Activated CD8-positive, alpha-beta T cell treated with anti-CD3 and anti-CD28 coated beads for 36 hours (primary cell): ENCODE measurements at regions of chr10 and their contacts with region 1.

Region 1: GRCh38 chr10:68955832-68956532 is at the start of gene DDX21:
- DNase-seq: peak; percentile 93
- ATAC-seq: peak; percentile 88
- H3K4me3 Mint-ChIP-seq: peak within 1 kb of the TSS; percentile 99
- H3K27ac Mint-ChIP-seq: peak within 1 kb of the TSS; percentile 100
- H3K4me1 Mint-ChIP-seq: peaks cover 38% of the 10 kb centered on the region
- H3K27me3 Mint-ChIP-seq: no peaks in the 10 kb centered on the region
- CTCF ChIP-seq: peak; percentile 80
- total RNA-seq, gene DDX21: 192 to 194 TPM

Region 2: GRCh38 chr10:68901104-68901927 is 54.7 kb before region 1 on chr10 and contains the start of gene DDX50:
- CTCF ChIA-PET with region 1: interaction called, 3 read pairs
- POLR2A ChIA-PET with region 1: interaction called, 34 read pairs
- intact Hi-C with region 1: loop called (anchors 5 kb)
- DNase-seq: peak; percentile 99
- ATAC-seq: peak; percentile 97
- H3K4me3 Mint-ChIP-seq: peak within 1 kb of the TSS; percentile 99
- H3K27ac Mint-ChIP-seq: peak within 1 kb of the TSS; percentile 99
- H3K4me1 Mint-ChIP-seq: peaks cover 41% of the 10 kb centered on the region
- H3K27me3 Mint-ChIP-seq: no peaks in the 10 kb centered on the region
- CTCF ChIP-seq: no peak
- total RNA-seq, gene DDX50: 102 to 105 TPM

Region 3: DNA sequence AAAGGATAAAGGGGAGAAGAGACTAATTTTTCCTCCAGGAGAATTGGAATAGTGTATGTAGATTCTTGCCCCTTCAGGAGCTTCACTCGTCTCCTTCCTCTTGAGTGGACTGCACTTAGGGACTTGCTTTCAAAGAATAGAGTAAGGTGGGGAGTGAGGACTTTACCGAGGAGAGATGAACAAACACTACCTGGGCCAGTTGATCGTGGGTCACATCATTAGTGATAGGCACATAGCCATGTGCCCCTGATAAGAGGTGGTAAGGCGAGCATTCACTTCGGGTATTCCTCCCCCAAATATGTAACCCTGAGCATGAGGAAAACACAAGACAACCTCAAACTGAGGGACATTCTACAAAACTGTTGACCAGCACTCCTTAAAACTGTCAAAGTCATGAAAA is 18.0 kb after region 1 on chr10:
- CTCF ChIA-PET with region 1: interaction called, 9 read pairs
- POLR2A ChIA-PET with region 1: interaction called, 105 read pairs
- intact Hi-C with region 1: no loop called
- DNase-seq: no peak
- ATAC-seq: no peak
- H3K4me3 Mint-ChIP-seq: no peak overlapping the region
- H3K27ac Mint-ChIP-seq: no peak overlapping the region
- H3K4me1 Mint-ChIP-seq: peaks cover 6% of the 10 kb centered on the region
- H3K27me3 Mint-ChIP-seq: no peaks in the 10 kb centered on the region
- CTCF ChIP-seq: no peak

Region 4: DNA sequence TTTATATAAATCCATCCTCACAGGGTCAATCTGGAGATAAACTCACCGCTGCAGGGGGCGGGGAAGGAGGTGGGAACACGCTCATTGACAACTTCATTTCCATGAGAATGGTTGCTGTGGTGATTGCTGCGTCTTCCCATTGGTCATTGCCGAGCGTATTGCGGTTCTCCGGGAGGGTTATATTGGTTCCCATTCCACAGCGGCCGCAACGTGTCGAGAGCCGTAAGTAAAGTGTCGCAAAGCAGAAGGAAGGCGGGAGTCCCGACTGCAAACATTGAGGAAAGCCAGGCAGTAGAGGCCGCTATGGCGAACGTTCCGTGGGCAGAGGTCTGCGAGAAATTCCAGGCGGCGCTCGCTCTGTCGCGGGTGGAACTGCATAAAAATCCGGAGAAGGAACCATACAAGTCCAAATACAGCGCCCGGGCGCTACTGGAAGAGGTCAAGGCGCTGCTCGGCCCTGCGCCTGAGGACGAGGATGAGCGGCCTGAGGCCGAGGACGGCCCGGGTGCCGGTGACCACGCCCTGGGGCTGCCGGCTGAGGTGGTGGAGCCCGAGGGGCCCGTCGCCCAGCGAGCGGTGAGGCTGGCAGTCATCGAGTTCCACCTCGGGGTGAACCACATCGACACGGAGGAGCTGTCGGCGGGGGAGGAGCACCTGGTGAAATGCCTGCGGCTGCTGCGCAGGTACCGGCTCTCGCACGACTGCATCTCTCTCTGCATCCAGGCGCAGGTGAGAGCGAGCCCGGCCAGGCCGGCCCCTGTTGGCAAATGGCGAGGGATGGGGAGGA is 32.7 kb after region 1 on chr10 and contains the start of gene KIFBP:
- CTCF ChIA-PET with region 1: interaction called, 14 read pairs
- POLR2A ChIA-PET with region 1: interaction called, 11 read pairs
- intact Hi-C with region 1: no loop called
- DNase-seq: peak; percentile 92
- ATAC-seq: peak; percentile 87
- H3K4me3 Mint-ChIP-seq: peak within 1 kb of the TSS; percentile 98
- H3K27ac Mint-ChIP-seq: peak within 1 kb of the TSS; percentile 95
- H3K4me1 Mint-ChIP-seq: peaks cover 50% of the 10 kb centered on the region
- H3K27me3 Mint-ChIP-seq: no peaks in the 10 kb centered on the region
- CTCF ChIP-seq: peak; percentile 39
- total RNA-seq, gene KIFBP: 9.7 to 10.9 TPM

Region 5: DNA sequence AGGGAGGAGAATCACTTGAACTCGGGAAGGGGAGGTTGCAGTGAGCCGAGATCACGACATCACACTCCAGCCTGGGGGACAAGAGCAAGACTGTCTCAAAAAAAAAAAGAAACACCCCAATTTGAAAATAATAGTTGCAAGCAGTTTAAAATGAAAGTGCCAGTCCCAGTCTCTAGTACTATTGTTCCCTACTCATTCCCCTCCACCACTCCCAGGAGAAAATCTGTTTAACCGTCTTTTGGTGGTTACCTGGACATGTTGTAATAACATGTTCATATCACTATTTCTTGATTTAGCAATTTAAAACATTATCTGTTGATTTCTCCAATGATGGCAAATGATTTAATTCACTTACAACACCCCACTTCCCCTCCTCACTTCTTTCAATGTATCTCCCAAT is 77.3 kb after region 1 on chr10:
- CTCF ChIA-PET with region 1: no interaction called
- POLR2A ChIA-PET with region 1: no interaction called
- intact Hi-C with region 1: no loop called
- DNase-seq: no peak
- ATAC-seq: no peak
- H3K4me3 Mint-ChIP-seq: no peak overlapping the region
- H3K27ac Mint-ChIP-seq: no peak overlapping the region
- H3K4me1 Mint-ChIP-seq: peaks cover 2% of the 10 kb centered on the region
- H3K27me3 Mint-ChIP-seq: no peaks in the 10 kb centered on the region
- CTCF ChIP-seq: no peak

Region 6: DNA sequence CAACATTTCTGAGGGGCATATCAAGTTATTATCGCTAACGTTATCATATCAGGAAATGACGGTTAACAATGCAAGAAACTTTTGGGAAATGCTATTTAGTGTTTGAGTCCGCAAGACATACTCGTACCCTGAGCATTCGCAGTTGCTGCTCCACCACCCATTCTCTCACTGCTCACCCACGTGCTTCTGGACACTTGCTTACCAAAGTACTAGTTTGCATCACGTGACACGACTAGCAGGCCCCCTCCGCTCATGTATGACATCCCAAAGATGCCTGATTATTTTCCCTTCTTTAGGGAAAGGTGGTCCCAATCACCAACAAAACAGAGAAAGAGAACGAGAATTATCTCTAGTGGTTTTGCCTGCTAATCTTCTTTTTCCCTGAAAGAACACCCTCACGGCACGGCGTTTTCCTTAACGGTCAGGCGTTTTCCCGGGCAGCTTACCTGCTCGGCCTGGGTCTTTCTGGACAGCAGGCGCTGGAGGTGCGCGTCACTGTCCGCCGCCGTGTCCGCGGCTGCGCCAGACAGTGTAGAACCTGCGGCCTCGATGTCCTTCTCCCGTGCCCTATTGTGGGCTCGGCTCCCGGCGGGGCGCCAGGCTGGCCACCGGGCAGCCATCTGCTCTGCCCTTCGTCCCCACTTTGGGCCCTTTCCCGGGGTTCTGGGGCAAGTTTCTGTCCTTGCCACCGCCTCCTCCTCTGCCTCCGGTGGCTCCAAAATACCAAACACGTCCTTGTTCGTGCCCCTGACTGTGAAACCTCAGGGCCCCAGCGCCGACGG is 224.0 kb after region 1 on chr10 and contains the start of gene SUPV3L1:
- CTCF ChIA-PET with region 1: no interaction called
- POLR2A ChIA-PET with region 1: interaction called, 11 read pairs
- intact Hi-C with region 1: no loop called
- DNase-seq: peak; percentile 96
- ATAC-seq: peak; percentile 91
- H3K4me3 Mint-ChIP-seq: peak within 1 kb of the TSS; percentile 84
- H3K27ac Mint-ChIP-seq: peak within 1 kb of the TSS; percentile 100
- H3K4me1 Mint-ChIP-seq: peaks cover 36% of the 10 kb centered on the region
- H3K27me3 Mint-ChIP-seq: no peaks in the 10 kb centered on the region
- CTCF ChIP-seq: no peak
- total RNA-seq, gene SUPV3L1: 37.6 to 42.7 TPM